ENCODE measurements at regions of chr5 and their contacts with region 1.

Region 1: GRCh38 chr5:157148734-157149615 is 6.3 kb upstream of the MED7 start:
- DNase-seq: peak; percentile 80
- ATAC-seq: peak; percentile 81
- H3K4me3 ChIP-seq: no peak overlapping the region
- H3K4me3 Mint-ChIP-seq: no peak overlapping the region
- H3K27ac ChIP-seq: no peak overlapping the region
- H3K27ac Mint-ChIP-seq: no peak overlapping the region
- H3K4me1 ChIP-seq: peaks cover 2 to 5% of the 10 kb centered on the region in 2 donors
- H3K4me1 Mint-ChIP-seq: peaks cover 5% of the 10 kb centered on the region
- H3K27me3 ChIP-seq: no peaks in the 10 kb centered on the region
- H3K27me3 Mint-ChIP-seq: no peaks in the 10 kb centered on the region
- CTCF ChIP-seq: peak; percentile 97

Region 2: GRCh38 chr5:157076558-157076957 is 72.4 kb before region 1 on chr5:
- CTCF ChIA-PET with region 1: no interaction called
- POLR2A ChIA-PET with region 1: no interaction called
- intact Hi-C with region 1: no loop called
- DNase-seq: no peak
- ATAC-seq: no peak
- H3K4me3 ChIP-seq: no peak overlapping the region
- H3K4me3 Mint-ChIP-seq: no peak overlapping the region
- H3K27ac ChIP-seq: no peak overlapping the region
- H3K27ac Mint-ChIP-seq: no peak overlapping the region
- H3K4me1 ChIP-seq: no peaks in the 10 kb centered on the region
- H3K4me1 Mint-ChIP-seq: peaks cover 4% of the 10 kb centered on the region
- H3K27me3 ChIP-seq: no peaks in the 10 kb centered on the region
- H3K27me3 Mint-ChIP-seq: peaks cover 7% of the 10 kb centered on the region
- CTCF ChIP-seq: no peak

Region 3: DNA sequence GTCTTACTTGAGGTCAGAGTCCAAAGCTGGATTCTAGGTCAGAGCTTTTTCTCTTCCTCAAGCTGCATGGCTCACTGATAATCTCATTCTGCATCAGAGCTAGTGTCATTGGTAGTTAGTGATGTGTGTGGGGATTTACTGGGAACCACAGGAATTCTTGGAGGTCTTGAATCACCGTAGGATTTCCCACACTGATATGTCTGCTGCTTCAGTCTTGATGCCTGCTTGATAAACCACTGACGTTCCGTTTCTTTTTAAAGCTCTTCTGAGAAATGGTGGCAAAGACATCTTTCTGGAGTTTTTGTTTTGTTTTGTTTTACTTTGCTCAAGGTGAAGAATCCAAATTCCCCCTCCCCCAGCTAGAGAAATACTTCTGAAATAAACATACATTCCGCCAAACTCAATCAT is 18.2 kb after region 1 on chr5:
- CTCF ChIA-PET with region 1: interaction called, 10 read pairs
- POLR2A ChIA-PET with region 1: no interaction called
- intact Hi-C with region 1: no loop called
- DNase-seq: no peak
- ATAC-seq: no peak
- H3K4me3 ChIP-seq: no peak overlapping the region
- H3K4me3 Mint-ChIP-seq: no peak overlapping the region
- H3K27ac ChIP-seq: no peak overlapping the region
- H3K27ac Mint-ChIP-seq: no peak overlapping the region
- H3K4me1 ChIP-seq: peaks cover 5% of the 10 kb centered on the region in 2 donors
- H3K4me1 Mint-ChIP-seq: peaks cover 14% of the 10 kb centered on the region
- H3K27me3 ChIP-seq: no peaks in the 10 kb centered on the region
- H3K27me3 Mint-ChIP-seq: no peaks in the 10 kb centered on the region
- CTCF ChIP-seq: no peak

Region 4: GRCh38 chr5:157312492-157312891 is 163.5 kb after region 1 on chr5:
- CTCF ChIA-PET with region 1: interaction called, 27 read pairs
- POLR2A ChIA-PET with region 1: interaction called, 3 read pairs
- intact Hi-C with region 1: loop called (anchors 1 kb)
- DNase-seq: peak; percentile 79
- ATAC-seq: peak; percentile 84
- H3K4me3 ChIP-seq: no peak overlapping the region
- H3K4me3 Mint-ChIP-seq: no peak overlapping the region
- H3K27ac ChIP-seq: peak overlapping the region; percentile 13 to 53
- H3K27ac Mint-ChIP-seq: peak overlapping the region; percentile 70
- H3K4me1 ChIP-seq: peaks cover 5 to 26% of the 10 kb centered on the region in 2 donors
- H3K4me1 Mint-ChIP-seq: peaks cover 30% of the 10 kb centered on the region
- H3K27me3 ChIP-seq: no peaks in the 10 kb centered on the region
- H3K27me3 Mint-ChIP-seq: no peaks in the 10 kb centered on the region
- CTCF ChIP-seq: peak; percentile 84

Measured in B cell (primary cell).